Aorta (tissue), 5 donors: ENCODE measurements at regions of chr12 and their contacts with region 1.

Region 1: GRCh38 chr12:57452937-57453509 is 2.1 kb upstream of the INHBE start:
- DNase-seq: peak; percentile 87 to 94
- ATAC-seq: peak; percentile 90
- H3K4me3 ChIP-seq: no peak overlapping the region
- H3K27ac ChIP-seq: peak overlapping the region in 1 of 2 donors; percentile 76
- H3K4me1 ChIP-seq: no peaks in the 10 kb centered on the region
- H3K27me3 ChIP-seq: no peaks in the 10 kb centered on the region

Region 2: DNA sequence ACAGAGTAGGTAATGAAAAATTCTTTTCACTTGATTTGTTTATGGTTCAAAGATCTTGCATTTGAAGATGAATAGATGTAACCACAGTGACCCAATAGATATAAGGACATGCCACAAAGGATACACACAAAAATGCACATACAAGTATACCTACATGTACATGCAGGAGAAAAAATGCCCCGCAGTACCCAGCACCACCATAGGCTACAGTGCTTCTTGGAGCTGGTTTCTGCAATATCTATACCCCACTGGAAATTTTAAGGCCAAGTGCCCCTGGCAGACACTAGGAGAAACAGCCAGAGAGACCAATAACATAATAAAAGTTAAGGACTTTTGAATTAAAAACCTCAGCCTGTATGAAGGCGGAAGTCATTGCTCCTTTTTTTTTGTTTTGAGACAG is 189.9 kb before region 1 on chr12:
- intact Hi-C with region 1: loop called (anchors 1 to 5 kb)
- DNase-seq: no peak
- ATAC-seq: no peak
- H3K4me3 ChIP-seq: no peak overlapping the region
- H3K27ac ChIP-seq: no peak overlapping the region
- H3K4me1 ChIP-seq: no peaks in the 10 kb centered on the region
- H3K27me3 ChIP-seq: no peaks in the 10 kb centered on the region

Region 3: GRCh38 chr12:57268264-57268663 is 184.8 kb before region 1 on chr12:
- intact Hi-C with region 1: loop called (anchors 1 to 5 kb)
- DNase-seq: no peak
- ATAC-seq: no peak
- H3K4me3 ChIP-seq: no peak overlapping the region
- H3K27ac ChIP-seq: no peak overlapping the region
- H3K4me1 ChIP-seq: no peaks in the 10 kb centered on the region
- H3K27me3 ChIP-seq: no peaks in the 10 kb centered on the region

Region 4: DNA sequence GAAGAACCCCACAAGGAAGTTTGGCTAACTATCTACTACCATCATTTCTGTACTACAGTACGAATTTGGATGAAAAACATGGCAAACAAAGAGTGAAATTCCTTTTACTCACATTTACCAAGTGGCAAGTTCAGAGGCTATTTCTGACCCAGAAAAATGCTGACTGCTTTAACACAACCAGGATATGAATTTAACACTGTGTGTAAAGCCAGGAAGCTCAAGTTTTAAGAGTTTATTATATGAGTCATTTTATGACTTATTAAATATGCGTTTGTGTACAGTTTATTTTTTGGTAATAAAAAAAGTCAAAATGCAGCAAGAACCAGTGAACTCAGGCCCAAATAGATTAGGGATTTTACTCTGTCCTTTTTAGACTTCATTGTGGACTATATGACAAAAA is 143.6 kb before region 1 on chr12:
- intact Hi-C with region 1: loop called (anchors 1 to 2 kb)
- DNase-seq: no peak
- ATAC-seq: no peak
- H3K4me3 ChIP-seq: no peak overlapping the region
- H3K27ac ChIP-seq: peak overlapping the region; percentile 61 to 64
- H3K4me1 ChIP-seq: no peaks in the 10 kb centered on the region
- H3K27me3 ChIP-seq: no peaks in the 10 kb centered on the region

Region 5: DNA sequence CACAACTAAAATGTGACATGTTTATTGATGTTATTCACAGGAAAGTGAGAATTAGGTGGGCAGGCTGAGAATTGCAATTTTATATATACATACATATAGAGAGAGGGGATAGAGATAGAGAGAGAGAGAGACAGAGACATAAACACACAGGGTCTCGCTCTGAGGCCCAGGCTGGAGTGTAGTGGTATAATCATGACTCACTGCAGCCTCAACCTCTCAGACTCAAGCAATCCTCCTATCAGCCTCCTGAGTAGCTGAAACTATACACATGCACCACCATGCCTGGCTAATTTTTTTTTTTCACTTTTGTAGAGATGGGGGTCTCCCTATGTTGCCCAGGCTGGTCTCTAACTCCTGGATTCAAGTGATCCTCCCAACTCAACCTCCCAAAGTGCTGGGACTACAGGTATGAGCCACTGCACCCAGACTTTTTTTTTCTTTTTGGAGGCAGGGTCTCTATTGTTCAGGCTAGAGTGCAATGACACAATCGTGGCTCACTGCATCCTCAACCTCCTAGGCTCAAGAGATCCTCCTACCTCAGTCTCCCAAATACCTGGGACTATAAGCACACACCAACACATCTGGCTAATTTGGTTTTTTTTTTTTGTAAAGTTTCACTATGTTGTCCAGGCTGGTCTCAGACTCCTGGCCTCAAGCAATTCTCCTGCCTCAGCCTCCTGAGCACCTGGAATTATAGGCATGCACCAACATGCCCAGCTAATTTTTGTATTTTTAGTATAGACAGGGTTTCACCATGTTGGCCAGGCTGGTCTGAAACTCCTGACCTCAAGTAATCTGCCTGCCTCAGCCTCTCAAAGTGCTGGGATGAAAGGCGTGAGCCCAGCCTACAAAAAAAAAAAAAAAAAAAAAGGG is 71.1 kb before region 1 on chr12:
- intact Hi-C with region 1: loop called in 1 of 2 experiments (anchors 5 kb)
- DNase-seq: no peak
- ATAC-seq: no peak
- H3K4me3 ChIP-seq: no peak overlapping the region
- H3K27ac ChIP-seq: no peak overlapping the region
- H3K4me1 ChIP-seq: no peaks in the 10 kb centered on the region
- H3K27me3 ChIP-seq: no peaks in the 10 kb centered on the region

Region 6: DNA sequence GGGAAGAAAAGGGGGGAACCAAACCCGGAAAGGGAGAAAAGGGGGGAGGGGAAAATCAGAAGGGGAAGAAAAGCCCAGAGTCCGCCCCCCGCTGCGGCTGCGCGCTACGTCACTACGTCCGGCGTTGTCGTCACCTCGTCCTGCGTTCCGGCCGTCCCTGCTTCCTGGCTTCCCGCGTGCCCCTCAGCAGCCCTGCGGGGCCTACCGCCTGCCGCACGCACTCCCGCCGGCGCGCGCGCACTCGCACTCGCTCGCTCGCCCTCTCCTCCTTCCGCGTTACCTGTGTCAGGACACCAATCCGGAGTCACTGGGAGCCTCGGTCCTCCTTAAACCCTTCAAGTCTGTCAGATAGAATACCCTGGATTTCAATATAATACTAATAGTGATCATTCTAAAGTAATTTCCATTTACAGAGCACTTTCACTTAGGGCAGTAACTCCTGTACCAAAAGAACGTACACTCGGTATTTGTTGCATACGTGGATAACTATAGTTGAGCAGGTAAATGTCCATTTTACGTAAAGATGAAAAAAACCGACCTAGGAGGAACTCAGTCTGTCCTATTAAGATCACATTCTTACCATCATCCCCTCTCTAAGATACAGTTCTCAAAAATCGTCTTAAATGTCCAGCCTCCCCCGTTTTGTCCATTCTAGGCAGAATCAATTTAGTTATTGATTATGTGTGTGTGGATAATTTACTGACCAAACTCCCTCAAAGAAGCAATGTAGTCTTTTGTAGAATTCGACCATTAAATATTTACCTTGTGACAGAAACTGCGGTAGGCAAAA is 21.9 kb before region 1 on chr12 and contains the start of gene R3HDM2:
- intact Hi-C with region 1: no loop called
- DNase-seq: peak; percentile 98 to 99
- ATAC-seq: peak; percentile 97
- H3K4me3 ChIP-seq: peak within 1 kb of the TSS; percentile 71 to 99
- H3K27ac ChIP-seq: peak within 1 kb of the TSS; percentile 95 to 98
- H3K4me1 ChIP-seq: no peaks in the 10 kb centered on the region
- H3K27me3 ChIP-seq: no peaks in the 10 kb centered on the region
- total RNA-seq, gene R3HDM2: 55.8 to 75.4 TPM